Pancreas (tissue), 10 donors: ENCODE measurements at regions of chr2 and their contacts with region 1.

Region 1: DNA sequence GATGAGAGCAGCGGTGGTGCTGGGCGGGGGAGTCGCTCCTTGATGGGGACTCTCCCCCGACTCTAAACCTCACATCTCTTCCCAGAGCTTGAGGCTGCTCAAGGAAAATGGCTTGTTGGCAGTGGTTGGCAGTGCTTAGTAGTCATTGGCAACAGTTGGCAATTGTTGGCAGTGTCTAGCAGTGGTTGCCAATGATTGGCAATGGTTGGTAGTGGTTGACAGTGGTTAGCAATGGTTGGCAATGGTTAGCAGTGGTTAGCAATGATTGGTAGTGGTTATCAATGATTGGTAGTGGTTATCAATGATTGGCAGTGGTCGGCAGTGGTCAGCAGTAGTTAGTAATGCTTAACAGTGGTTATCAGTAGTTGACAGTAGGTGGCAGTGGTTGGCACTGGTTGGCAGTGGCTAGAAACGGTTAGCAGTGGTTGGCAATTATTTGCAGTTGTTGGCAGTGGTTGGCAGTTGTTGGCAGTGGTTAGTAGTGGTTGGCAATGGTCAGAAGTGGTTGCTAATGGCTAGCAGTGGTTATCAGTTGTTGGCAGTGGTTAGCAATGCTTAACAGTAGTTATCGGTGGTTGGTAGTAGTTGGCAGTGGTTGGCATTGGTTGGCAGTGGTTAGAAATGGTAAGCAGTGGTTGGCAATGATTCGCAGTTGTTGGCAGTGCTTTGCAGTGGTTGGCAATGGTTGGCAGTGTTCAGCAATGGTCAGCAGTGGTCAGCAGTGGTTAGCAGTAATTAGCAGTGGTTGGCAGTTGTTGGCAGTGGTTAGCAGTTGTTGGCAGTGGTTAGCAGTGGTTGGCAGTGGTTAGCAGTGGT is 85.4 kb upstream of the OTOS start:
- DNase-seq: peak in 1 of 6 donors; percentile 7
- ATAC-seq: peak in 1 of 4 donors; percentile 37
- H3K4me3 ChIP-seq: no peak overlapping the region
- H3K27ac ChIP-seq: no peak overlapping the region
- H3K4me1 ChIP-seq: no peaks in the 10 kb centered on the region
- H3K27me3 ChIP-seq: no peaks in the 10 kb centered on the region
- CTCF ChIP-seq: no peak

Region 2: GRCh38 chr2:240339996-240340761 is 114.3 kb after region 1 on chr2:
- intact Hi-C with region 1: loop called in 1 of 3 experiments (anchors 10 kb)
- DNase-seq: peak in 2 of 6 donors; percentile 55 to 60
- ATAC-seq: no peak
- H3K4me3 ChIP-seq: no peak overlapping the region
- H3K27ac ChIP-seq: no peak overlapping the region
- H3K4me1 ChIP-seq: no peaks in the 10 kb centered on the region
- H3K27me3 ChIP-seq: no peaks in the 10 kb centered on the region
- CTCF ChIP-seq: no peak

Region 3: DNA sequence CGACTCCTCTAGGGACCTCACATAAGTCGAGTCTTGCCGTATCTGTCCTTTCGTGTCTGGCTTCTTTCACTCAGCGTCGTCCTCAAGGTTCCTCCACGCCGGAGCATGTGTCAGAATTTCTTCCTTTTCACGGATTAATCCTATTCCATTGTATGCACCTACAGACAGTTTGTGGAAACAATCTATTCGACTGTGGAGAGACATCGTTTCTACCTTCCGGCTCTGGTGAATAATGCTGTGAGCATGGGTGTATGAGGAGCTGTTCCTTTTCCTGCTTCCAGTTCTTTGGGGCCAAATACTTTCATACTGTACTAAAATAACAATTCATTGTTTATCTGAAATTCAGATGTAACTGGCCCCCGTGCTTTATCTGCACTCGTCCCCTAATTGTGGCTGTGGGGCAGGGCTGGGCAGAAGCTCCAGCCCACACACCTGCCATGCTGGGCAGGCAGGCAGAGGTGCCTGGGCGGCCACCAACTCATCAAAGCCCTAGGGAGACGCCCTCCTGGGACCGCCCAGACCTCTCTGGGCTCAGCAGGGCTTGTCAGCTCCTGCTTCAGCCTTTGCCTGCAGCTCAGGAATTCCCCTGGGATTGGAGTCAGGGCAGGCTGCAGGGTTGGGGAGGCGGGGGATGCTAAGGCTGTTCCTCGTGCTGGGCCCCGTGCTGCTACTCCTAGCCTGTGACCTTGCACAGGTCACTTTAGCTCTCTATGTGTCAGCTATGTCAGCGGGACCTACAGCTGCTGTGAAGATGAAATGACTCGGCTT is 224.1 kb after region 1 on chr2:
- intact Hi-C with region 1: loop called in 1 of 3 experiments (anchors 10 kb)
- DNase-seq: peak in 2 of 6 donors; percentile 11 to 49
- ATAC-seq: no peak
- H3K4me3 ChIP-seq: no peak overlapping the region
- H3K27ac ChIP-seq: no peak overlapping the region
- H3K4me1 ChIP-seq: peaks cover 0 to 3% (median 0%) of the 10 kb centered on the region in 3 donors
- H3K27me3 ChIP-seq: no peaks in the 10 kb centered on the region
- CTCF ChIP-seq: no peak